ENCODE measurements at regions of chr14 and their contacts with region 1.

Region 1: GRCh38 chr14:21383848-21384493 is at the start of gene SUPT16H:
- DNase-seq: peak; percentile 97
- H3K4me3 Mint-ChIP-seq: peak within 1 kb of the TSS; percentile 95
- H3K27ac Mint-ChIP-seq: peak within 1 kb of the TSS; percentile 98
- H3K4me1 Mint-ChIP-seq: peaks cover 36% of the 10 kb centered on the region
- H3K27me3 Mint-ChIP-seq: no peaks in the 10 kb centered on the region
- total RNA-seq, gene SUPT16H: 156 to 158 TPM

Region 2: DNA sequence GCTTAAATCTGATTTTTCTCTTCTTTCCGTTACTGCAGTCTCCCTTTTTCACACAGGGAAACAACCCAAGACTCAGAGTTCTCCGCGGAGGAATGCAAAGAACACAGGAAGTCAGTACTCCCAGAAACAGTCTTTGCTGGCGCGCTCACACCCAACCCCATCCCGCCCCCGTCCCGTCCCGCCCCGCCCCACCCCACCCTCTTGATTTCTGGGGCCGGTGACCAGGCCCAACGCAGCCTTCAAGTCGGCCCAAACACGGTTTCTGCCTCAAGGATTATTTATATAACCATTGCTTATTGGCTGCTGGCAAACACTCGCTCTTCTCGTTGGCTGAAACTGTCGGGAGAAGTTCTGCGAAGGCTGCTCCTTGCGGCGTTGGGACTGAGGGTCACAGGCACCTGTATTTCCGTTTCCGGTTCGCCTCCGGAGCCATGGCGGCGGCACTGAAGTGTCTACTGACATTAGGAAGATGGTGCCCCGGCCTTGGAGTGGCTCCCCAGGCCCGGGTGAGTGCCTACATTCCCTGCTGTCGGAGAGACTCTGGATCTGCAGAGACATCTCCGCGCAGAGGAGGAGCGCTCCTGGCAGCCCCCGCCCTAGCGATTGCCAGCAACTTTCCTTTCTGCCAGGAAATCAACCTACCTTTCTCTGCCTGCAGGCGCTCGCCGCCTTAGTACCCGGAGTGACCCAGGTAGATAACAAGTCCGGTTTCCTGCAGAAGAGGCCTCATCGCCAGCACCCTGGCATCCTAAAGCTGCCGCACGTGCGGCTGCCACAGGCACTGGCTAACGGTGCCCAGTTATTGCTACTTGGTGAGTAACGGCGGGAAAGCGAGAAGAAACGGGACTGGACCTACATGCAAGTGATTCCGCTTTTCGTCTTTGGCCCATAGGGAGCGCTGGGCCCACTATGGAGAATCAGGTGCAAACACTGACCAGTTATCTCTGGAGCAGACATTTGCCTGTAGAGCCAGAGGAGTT is 394.1 kb before region 1 on chr14 and contains the start of gene METTL17:
- CTCF ChIA-PET with region 1: no interaction called
- POLR2A ChIA-PET with region 1: no interaction called
- intact Hi-C with region 1: loop called (anchors 1 kb)
- DNase-seq: peak; percentile 94
- H3K4me3 Mint-ChIP-seq: peak within 1 kb of the TSS; percentile 91
- H3K27ac Mint-ChIP-seq: peak within 1 kb of the TSS; percentile 84
- H3K4me1 Mint-ChIP-seq: peaks cover 30% of the 10 kb centered on the region
- H3K27me3 Mint-ChIP-seq: no peaks in the 10 kb centered on the region
- total RNA-seq, gene METTL17: 74.9 to 78.9 TPM

Region 3: GRCh38 chr14:21215130-21215878 is 168.7 kb before region 1 on chr14:
- CTCF ChIA-PET with region 1: no interaction called
- POLR2A ChIA-PET with region 1: interaction called, 5 read pairs
- intact Hi-C with region 1: loop called (anchors 5 kb)
- DNase-seq: no peak
- H3K4me3 Mint-ChIP-seq: no peak overlapping the region
- H3K27ac Mint-ChIP-seq: peak overlapping the region; percentile 86
- H3K4me1 Mint-ChIP-seq: peaks cover 74% of the 10 kb centered on the region
- H3K27me3 Mint-ChIP-seq: no peaks in the 10 kb centered on the region

Region 4: DNA sequence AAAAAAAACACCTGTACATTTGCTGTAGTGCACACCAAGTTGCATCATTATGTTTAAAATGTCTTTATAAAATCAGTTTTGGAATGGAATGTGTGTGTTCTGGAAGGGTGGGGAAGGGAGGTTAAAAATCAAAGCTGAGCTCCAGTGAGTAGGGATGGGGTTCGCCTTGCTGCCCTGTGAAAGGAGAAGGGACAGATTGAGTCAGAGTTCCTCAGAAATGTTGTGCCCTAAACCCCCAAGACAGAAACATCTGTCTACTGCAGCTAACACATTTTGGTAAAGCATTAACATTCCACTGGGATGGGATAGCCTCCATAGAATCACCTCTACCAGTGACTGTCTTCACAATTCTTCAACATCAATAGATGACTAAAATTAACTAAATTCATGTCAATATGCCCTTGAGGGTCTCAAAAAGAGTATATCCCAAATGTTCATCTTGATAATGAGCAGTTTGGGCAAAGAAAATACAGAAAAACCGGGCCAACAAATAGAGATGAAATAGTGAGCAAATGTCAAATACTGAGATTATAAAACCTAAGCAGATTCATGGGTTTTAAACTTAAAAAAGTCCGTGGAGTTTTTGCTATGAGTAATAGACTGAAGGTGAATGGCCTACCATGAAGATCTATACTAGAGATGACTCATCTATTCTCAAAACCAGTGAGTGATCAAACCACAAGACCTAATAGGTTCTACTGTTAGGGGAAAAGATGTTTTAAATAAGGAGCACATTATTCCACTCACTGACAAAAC is 120.1 kb before region 1 on chr14:
- CTCF ChIA-PET with region 1: interaction called, 3 read pairs
- POLR2A ChIA-PET with region 1: interaction called, 12 read pairs
- intact Hi-C with region 1: loop called (anchors 1 kb)
- DNase-seq: no peak
- H3K4me3 Mint-ChIP-seq: peak overlapping the region; percentile 100
- H3K27ac Mint-ChIP-seq: peak overlapping the region; percentile 100
- H3K4me1 Mint-ChIP-seq: peaks cover 67% of the 10 kb centered on the region
- H3K27me3 Mint-ChIP-seq: no peaks in the 10 kb centered on the region

Region 5: GRCh38 chr14:21308479-21309237 is 75.3 kb before region 1 on chr14:
- CTCF ChIA-PET with region 1: no interaction called
- POLR2A ChIA-PET with region 1: no interaction called
- intact Hi-C with region 1: loop called (anchors 1 kb)
- DNase-seq: peak; percentile 91
- H3K4me3 Mint-ChIP-seq: peak overlapping the region; percentile 70
- H3K27ac Mint-ChIP-seq: peak overlapping the region; percentile 80
- H3K4me1 Mint-ChIP-seq: peaks cover 18% of the 10 kb centered on the region
- H3K27me3 Mint-ChIP-seq: no peaks in the 10 kb centered on the region

Region 6: GRCh38 chr14:21437063-21437901 is 53.3 kb after region 1 on chr14:
- CTCF ChIA-PET with region 1: no interaction called
- POLR2A ChIA-PET with region 1: interaction called, 9 read pairs
- intact Hi-C with region 1: loop called (anchors 1 kb)
- DNase-seq: peak; percentile 99
- H3K4me3 Mint-ChIP-seq: peak overlapping the region; percentile 80
- H3K27ac Mint-ChIP-seq: peak overlapping the region; percentile 71
- H3K4me1 Mint-ChIP-seq: peaks cover 52% of the 10 kb centered on the region
- H3K27me3 Mint-ChIP-seq: no peaks in the 10 kb centered on the region

Measured in activated CD4-positive, alpha-beta memory T cell treated with anti-CD3 and anti-CD28 coated beads for 36 hours (primary cell).